GM10248 (cell line): ENCODE measurements at regions of chr22 and their contacts with region 1.

Region 1: DNA sequence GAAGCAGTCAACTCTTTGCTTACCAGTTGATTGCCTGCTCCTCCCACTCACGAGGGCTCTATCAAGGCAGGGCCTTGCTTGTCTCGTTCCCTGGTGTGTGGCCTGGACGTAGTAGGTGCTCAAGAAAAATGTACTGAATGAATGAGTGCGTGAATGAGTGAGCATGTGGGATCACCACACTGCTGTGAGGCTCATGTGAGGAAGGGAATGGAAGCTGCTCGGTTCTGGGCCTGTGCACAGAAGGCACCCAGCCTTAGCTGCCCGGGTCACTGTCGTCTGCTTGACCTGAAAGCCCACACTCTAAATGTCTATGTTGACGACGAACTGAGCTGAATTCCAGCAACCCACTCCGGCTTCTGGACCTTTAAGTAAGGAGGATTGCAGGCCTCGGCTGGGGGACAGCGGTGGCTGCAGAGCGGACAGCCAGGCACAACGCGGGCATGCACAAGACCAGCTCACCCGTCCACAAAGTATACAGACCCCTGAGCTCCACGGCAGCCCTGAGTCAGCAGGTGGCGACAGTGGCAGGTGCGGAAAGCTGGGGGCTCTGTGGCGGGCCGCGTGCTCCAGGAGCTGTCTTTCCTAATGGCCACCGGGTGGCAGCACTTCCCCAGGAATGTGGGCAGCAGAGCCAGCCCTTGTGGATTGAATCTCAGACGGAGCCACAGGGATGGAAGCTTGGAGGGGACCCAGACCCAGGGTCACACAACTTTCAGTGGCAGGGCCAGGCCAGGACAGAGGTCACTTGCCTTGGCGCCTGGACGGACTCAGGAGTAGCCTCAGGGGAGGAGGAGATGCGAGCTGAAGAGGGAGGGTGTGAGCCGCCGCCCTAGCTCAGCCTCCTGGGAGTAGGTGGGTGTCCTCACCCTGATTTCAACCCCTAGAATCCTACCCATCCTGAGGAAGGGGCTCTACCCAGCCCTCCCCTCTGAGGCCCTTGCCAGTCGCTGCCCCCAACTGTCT is 5.0 kb upstream of the PICK1 start:
- DNase-seq: peak; percentile 91
- CTCF ChIP-seq: peak; percentile 94

Region 2: GRCh38 chr22:37244114-37244921 is 807.9 kb before region 1 on chr22 and contains the start of gene RAC2:
- CTCF ChIA-PET with region 1: no interaction called
- POLR2A ChIA-PET with region 1: no interaction called
- DNase-seq: peak; percentile 88
- CTCF ChIP-seq: no peak

Region 3: DNA sequence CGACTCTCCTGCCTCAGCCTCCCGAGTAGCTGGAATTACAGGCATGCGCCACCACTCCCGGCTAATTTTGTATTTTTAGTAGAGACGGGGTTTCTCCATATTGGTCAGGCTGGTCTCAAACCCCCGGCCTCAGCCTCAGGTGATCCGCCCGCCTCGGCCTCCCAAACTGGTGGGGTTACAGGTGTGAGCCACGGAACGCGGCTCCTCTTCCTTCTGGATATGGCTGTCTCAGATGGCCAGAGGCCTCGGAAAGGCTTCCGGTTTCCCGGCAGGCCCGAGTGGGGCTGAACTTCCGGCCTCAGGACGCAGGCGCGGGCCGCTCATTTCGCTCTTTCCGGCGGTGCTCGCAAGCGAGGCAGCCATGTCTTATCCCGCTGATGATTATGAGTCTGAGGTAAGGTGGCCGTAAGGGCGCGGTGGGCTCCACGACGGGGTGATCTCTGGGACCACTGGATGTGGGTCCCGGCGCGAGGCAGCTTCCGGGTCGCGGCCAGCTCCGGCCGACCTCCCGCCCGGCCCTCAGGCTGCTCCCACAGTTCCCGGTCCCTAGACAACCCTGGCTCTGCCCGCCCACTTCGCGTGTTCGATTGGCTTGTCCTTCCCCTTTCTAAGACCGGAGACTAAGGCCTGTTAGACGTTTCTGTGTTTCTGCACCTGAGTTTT is 203.0 kb before region 1 on chr22 and contains the start of gene EIF3L:
- CTCF ChIA-PET with region 1: no interaction called
- POLR2A ChIA-PET with region 1: no interaction called
- DNase-seq: peak; percentile 94
- CTCF ChIP-seq: no peak

Region 4: GRCh38 chr22:38032681-38033521 is 19.3 kb before region 1 on chr22:
- CTCF ChIA-PET with region 1: interaction called, 14 read pairs
- POLR2A ChIA-PET with region 1: no interaction called
- DNase-seq: no peak
- CTCF ChIP-seq: no peak

Region 5: DNA sequence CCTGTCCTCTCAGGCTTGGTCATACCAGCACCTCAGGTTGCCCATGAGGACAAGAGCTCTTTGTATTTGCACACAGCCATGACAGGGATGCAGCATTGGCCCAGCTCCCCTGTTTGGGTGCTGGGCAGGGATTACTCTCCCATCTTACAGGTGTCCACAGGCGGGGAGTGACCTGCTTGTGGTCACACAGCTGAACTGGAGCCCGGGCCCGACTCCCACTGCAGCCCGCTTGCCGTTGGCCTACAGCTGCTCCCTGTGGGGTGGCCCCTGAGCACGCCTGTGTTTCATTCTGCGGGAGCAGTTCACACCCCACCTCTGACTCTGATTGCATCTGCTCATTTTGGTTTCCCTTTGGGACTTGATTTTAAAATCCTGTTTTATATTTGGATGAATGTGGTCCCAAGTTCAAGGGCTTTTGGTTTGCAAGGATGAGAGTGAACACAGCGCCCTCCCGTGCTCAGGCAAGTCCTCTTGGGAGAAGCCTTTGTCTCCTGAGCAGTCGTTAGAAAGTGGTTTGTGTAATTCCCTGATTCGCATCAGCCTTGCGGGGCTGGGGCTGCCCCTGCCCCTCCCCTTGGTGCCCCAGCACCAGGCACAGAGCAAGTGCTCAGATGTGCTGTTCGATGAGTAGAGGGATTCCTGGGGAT is 14.3 kb after region 1 on chr22:
- CTCF ChIA-PET with region 1: interaction called, 36 read pairs
- POLR2A ChIA-PET with region 1: no interaction called
- DNase-seq: no peak
- CTCF ChIP-seq: no peak

Region 6: GRCh38 chr22:38104084-38104483 is 51.9 kb after region 1 on chr22:
- CTCF ChIA-PET with region 1: interaction called, 12 read pairs
- POLR2A ChIA-PET with region 1: no interaction called
- DNase-seq: no peak
- CTCF ChIP-seq: no peak

Region 7: DNA sequence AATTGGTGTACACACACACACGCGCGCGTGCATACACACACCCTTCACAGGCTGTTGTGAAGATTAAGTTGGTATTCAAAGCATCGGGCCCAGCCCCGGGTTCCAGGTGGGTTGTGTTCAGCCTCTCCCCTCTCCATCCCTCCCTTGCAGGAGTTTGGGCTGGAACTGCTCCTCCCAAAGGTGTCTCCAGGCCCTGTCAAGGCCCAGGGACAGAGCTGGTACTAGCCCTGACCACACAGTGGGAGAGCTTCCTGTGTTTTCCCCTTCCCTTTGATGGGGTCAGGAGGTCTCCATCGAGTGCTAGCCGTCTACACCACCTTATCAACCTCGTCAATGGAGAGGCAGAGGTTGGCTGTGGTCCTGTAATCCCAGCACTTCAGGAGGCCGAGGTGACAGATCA is 301.5 kb after region 1 on chr22:
- CTCF ChIA-PET with region 1: interaction called, 12 read pairs
- POLR2A ChIA-PET with region 1: no interaction called
- DNase-seq: peak; percentile 15
- CTCF ChIP-seq: no peak

Region 8: GRCh38 chr22:38490915-38491314 is 438.7 kb after region 1 on chr22:
- CTCF ChIA-PET with region 1: no interaction called
- POLR2A ChIA-PET with region 1: no interaction called
- DNase-seq: no peak
- CTCF ChIP-seq: no peak

Region 9: DNA sequence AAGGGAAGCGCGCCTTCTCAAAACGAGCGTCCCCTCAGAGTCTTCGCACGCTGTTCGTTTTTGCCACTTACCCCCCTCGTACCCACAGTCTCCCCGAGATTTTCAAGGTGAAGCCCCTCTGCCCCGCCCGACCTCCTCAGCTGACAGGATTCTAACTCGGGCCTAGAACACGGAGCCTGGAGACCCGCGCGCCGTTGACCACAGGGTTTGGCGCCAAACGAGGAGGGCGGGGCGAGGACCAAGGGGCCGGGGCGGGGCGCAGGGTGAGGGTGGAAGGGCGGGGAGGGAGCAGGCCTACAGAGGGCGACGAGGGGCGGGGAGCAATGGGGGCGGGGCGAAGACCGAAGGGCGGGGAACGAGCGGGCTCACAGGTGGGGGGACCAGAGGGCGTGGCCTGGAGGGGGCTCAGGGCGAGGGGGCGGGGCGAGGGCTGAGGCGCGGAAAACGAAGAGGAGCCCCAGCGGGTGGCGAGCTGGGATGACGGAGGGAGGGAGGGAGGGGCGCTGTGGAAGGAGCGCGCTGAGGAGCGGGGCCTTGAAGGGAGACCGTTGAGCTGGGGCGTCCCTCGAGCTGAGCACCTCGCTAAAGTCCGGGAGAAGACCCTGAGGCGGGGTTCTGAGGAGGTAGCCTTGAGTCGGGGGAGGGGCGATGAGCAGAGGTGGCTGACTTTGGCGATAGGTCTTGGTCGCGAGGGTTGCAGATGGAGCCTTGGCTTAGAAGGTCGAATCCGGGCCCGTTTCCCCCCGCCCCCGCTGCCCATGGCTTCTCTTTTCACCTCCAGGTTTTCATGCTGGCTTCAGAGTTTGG is 518.0 kb after region 1 on chr22 and contains the start of gene DMC1:
- CTCF ChIA-PET with region 1: interaction called, 44 read pairs
- POLR2A ChIA-PET with region 1: no interaction called
- DNase-seq: peak; percentile 100
- CTCF ChIP-seq: no peak